ENCODE measurements at regions of chrX and their contacts with region 1.

Region 1: DNA sequence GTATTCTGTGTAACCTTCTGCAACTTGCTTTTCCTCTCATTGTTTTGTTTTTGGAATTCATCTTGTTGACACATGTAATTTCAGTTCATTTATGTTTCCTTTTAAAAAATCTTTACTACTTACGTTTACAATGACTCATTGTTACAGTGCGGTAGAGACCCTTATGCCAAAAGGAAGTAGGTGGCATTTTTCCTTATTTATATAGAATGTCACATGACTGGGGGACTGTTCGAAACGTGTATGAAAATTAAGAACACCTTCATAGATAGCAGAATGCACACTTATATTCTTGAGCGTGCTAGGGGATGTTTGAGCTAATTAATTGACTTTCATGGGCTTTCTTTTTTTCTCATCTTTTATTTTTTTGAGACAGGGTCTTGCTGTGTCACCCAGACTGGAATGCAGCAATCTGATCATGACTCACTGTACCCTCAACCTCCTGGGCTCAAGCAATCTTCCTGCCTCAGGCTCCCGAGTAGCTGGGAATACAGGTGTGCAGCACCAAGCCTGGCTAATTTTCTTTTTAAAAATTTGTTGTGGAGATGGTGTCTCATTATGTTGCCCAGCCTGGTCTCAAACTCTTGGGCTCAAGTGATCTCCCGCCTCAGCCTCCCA is 7.3 kb downstream of the REPS2 start:
- DNase-seq: no peak
- H3K4me3 ChIP-seq: no peak overlapping the region
- H3K27ac ChIP-seq: no peak overlapping the region
- H3K4me1 ChIP-seq: no peaks in the 10 kb centered on the region
- H3K27me3 ChIP-seq: peaks cover 0 to 33% of the 10 kb centered on the region in 2 donors
- CTCF ChIP-seq: no peak
- POLR2A ChIP-seq: no peak

Region 2: GRCh38 chrX:16979226-16979625 is 25.5 kb after region 1 on chrX:
- intact Hi-C with region 1: no loop called
- DNase-seq: no peak
- H3K4me3 ChIP-seq: no peak overlapping the region
- H3K27ac ChIP-seq: peak overlapping the region in 1 of 2 donors; percentile 17
- H3K4me1 ChIP-seq: no peaks in the 10 kb centered on the region
- H3K27me3 ChIP-seq: peaks cover 0 to 17% of the 10 kb centered on the region in 2 donors
- CTCF ChIP-seq: no peak
- POLR2A ChIP-seq: no peak

Region 3: GRCh38 chrX:17007206-17007683 is 53.5 kb after region 1 on chrX:
- intact Hi-C with region 1: no loop called
- DNase-seq: no peak
- H3K4me3 ChIP-seq: no peak overlapping the region
- H3K27ac ChIP-seq: no peak overlapping the region
- H3K4me1 ChIP-seq: no peaks in the 10 kb centered on the region
- H3K27me3 ChIP-seq: peaks cover 0 to 41% of the 10 kb centered on the region in 2 donors
- CTCF ChIP-seq: no peak
- POLR2A ChIP-seq: no peak

Region 4: GRCh38 chrX:17413228-17413627 is 459.5 kb after region 1 on chrX:
- intact Hi-C with region 1: loop called (anchors 10 kb)
- DNase-seq: no peak
- H3K4me3 ChIP-seq: no peak overlapping the region
- H3K27ac ChIP-seq: peak overlapping the region in 1 of 2 donors; percentile 22
- H3K4me1 ChIP-seq: peaks cover 0 to 5% of the 10 kb centered on the region in 2 donors
- H3K27me3 ChIP-seq: peaks cover 0 to 23% of the 10 kb centered on the region in 2 donors
- CTCF ChIP-seq: no peak
- POLR2A ChIP-seq: no peak

Region 5: GRCh38 chrX:17788439-17788838 is 834.7 kb after region 1 on chrX:
- intact Hi-C with region 1: no loop called
- DNase-seq: peak; percentile 30 to 54
- H3K4me3 ChIP-seq: no peak overlapping the region
- H3K27ac ChIP-seq: peak overlapping the region in 1 of 2 donors; percentile 30
- H3K4me1 ChIP-seq: no peaks in the 10 kb centered on the region
- H3K27me3 ChIP-seq: peaks cover 0 to 22% of the 10 kb centered on the region in 2 donors
- CTCF ChIP-seq: peak; percentile 54 to 72 (median 61)
- POLR2A ChIP-seq: no peak

Region 6: DNA sequence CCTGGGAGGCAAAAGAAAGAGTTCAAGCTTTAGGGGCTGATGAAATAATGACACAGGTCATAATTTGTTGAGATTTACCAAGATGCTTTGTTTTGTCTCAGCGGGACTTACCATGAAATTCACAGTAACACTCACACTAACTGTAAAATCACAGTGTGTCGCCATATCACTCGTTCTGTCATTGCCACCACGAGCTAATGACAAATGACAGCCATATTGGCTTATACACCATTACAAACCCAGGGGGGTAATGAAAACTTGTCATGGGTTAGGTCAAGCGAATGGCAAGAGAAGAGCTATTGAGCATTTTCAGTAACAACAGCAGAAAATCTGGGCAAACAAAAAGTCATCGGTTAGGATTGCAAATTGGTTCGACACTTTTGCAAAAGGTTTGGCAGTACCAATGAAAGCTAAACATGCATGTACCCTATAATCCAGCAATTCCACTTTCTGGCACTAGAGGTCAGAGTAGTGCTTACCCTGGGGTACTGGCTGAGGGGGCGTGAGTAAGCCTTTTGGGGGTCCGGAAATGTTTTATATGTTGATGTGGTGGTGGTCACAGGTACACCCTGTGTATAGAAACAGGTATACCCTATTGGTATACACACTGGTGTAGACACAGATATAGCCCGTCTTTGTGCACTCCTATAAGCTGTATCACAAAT is 991.3 kb after region 1 on chrX:
- intact Hi-C with region 1: loop called (anchors 5 kb)
- DNase-seq: no peak
- H3K4me3 ChIP-seq: no peak overlapping the region
- H3K27ac ChIP-seq: no peak overlapping the region
- H3K4me1 ChIP-seq: no peaks in the 10 kb centered on the region
- H3K27me3 ChIP-seq: peaks cover 0 to 18% of the 10 kb centered on the region in 2 donors
- CTCF ChIP-seq: peak in 1 of 3 donors; percentile 25
- POLR2A ChIP-seq: no peak